ENCODE measurements at regions of chr6 and their contacts with region 1.

Region 1: DNA sequence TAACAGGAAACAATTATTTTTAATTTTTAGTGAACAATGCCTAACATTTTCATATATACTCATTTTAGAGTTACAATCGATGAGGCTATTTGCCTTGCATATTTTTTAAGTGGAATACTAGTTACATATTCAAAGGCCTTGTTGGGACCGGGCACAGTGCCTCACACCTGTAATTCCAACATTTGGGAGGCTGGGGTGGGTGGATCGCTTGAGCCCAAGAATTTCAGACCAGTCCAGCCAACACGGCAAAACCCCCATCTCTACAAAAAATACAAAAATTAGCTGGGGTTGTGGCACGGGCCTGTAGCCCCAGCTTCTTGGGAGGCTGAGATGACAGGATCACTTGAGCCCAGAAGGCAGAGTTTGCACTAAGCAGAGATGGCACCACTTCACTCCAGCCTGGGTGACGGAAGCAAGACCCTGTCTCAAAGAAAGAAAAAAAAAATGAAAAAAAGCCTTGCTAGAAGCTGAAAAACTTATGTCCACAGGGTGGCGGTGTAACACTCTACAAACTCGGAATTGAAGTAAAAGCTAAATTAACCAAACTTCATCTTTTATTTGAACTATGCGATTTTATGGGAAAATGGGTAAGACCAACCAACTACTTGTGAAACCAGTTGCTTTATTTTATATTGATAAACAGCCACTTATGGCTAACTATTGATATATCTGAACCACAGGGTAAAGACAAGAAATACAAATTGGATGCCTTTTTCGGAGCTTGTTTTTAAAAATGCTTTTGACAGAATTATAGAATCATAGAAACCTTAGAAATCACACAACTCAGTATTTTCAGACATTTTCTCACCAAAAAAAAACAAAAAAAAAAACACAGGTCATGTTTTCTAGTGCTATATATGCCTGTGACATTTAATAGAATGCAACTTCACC is 24.1 kb upstream of the ROS1 start:
- DNase-seq: peak in 3 of 5 donors; percentile 41 to 45 (median 41)
- ATAC-seq: peak in 1 of 4 donors; percentile 28
- H3K4me3 ChIP-seq: no peak overlapping the region
- H3K27ac ChIP-seq: no peak overlapping the region
- H3K4me1 ChIP-seq: peaks cover 0 to 9% (median 0%) of the 10 kb centered on the region in 12 donors
- H3K27me3 ChIP-seq: peaks cover 0 to 18% (median 4%) of the 10 kb centered on the region in 9 donors
- CTCF ChIP-seq: peak; percentile 66 to 86 (median 78)
- POLR2A ChIP-seq: no peak

Region 2: GRCh38 chr6:117346142-117346930 is 103.5 kb before region 1 on chr6:
- intact Hi-C with region 1: loop called in 4 of 10 experiments (anchors 5 to 10 kb)
- DNase-seq: no peak
- ATAC-seq: no peak
- H3K4me3 ChIP-seq: peak overlapping the region in 3 of 12 donors; percentile 21 to 31 (median 27)
- H3K27ac ChIP-seq: no peak overlapping the region
- H3K4me1 ChIP-seq: no peaks in the 10 kb centered on the region
- H3K27me3 ChIP-seq: peaks cover 0 to 3% (median 0%) of the 10 kb centered on the region in 9 donors
- CTCF ChIP-seq: peak; percentile 30 to 66 (median 54)
- POLR2A ChIP-seq: no peak

Region 3: GRCh38 chr6:117352466-117353081 is 97.2 kb before region 1 on chr6:
- intact Hi-C with region 1: loop called in 4 of 10 experiments (anchors 5 to 10 kb)
- DNase-seq: no peak
- ATAC-seq: no peak
- H3K4me3 ChIP-seq: no peak overlapping the region
- H3K27ac ChIP-seq: no peak overlapping the region
- H3K4me1 ChIP-seq: no peaks in the 10 kb centered on the region
- H3K27me3 ChIP-seq: no peaks in the 10 kb centered on the region
- CTCF ChIP-seq: peak in 9 of 12 donors; percentile 11 to 50 (median 23)
- POLR2A ChIP-seq: no peak

Region 4: GRCh38 chr6:117482240-117483003 is 32.6 kb after region 1 on chr6 and contains the start of gene DCBLD1:
- intact Hi-C with region 1: no loop called
- DNase-seq: peak; percentile 80 to 91 (median 84)
- ATAC-seq: peak; percentile 82 to 97 (median 92)
- H3K4me3 ChIP-seq: peak within 1 kb of the TSS; percentile 62 to 88 (median 78)
- H3K27ac ChIP-seq: peak within 1 kb of the TSS; percentile 19 to 92 (median 84)
- H3K4me1 ChIP-seq: peaks cover 0 to 40% (median 15%) of the 10 kb centered on the region in 12 donors
- H3K27me3 ChIP-seq: peaks cover 0 to 5% (median 0%) of the 10 kb centered on the region in 9 donors
- CTCF ChIP-seq: peak in 2 of 12 donors; percentile 15 to 16
- POLR2A ChIP-seq: peak in 1 of 2 donors; percentile 66
- total RNA-seq, gene DCBLD1: 3.1 to 11.4 (median 4.1) TPM

Region 5: GRCh38 chr6:117555882-117556498 is 106.2 kb after region 1 on chr6:
- intact Hi-C with region 1: loop called (anchors 1 to 5 kb)
- DNase-seq: peak in 2 of 5 donors; percentile 33 to 35
- ATAC-seq: peak in 1 of 4 donors; percentile 28
- H3K4me3 ChIP-seq: no peak overlapping the region
- H3K27ac ChIP-seq: no peak overlapping the region
- H3K4me1 ChIP-seq: peaks cover 0 to 8% (median 0%) of the 10 kb centered on the region in 12 donors
- H3K27me3 ChIP-seq: no peaks in the 10 kb centered on the region
- CTCF ChIP-seq: peak; percentile 74 to 97 (median 91)
- POLR2A ChIP-seq: no peak

Region 6: GRCh38 chr6:117642976-117643375 is 193.2 kb after region 1 on chr6:
- intact Hi-C with region 1: no loop called
- DNase-seq: no peak
- ATAC-seq: no peak
- H3K4me3 ChIP-seq: no peak overlapping the region
- H3K27ac ChIP-seq: no peak overlapping the region
- H3K4me1 ChIP-seq: no peaks in the 10 kb centered on the region
- H3K27me3 ChIP-seq: no peaks in the 10 kb centered on the region
- CTCF ChIP-seq: no peak
- POLR2A ChIP-seq: no peak

Region 7: DNA sequence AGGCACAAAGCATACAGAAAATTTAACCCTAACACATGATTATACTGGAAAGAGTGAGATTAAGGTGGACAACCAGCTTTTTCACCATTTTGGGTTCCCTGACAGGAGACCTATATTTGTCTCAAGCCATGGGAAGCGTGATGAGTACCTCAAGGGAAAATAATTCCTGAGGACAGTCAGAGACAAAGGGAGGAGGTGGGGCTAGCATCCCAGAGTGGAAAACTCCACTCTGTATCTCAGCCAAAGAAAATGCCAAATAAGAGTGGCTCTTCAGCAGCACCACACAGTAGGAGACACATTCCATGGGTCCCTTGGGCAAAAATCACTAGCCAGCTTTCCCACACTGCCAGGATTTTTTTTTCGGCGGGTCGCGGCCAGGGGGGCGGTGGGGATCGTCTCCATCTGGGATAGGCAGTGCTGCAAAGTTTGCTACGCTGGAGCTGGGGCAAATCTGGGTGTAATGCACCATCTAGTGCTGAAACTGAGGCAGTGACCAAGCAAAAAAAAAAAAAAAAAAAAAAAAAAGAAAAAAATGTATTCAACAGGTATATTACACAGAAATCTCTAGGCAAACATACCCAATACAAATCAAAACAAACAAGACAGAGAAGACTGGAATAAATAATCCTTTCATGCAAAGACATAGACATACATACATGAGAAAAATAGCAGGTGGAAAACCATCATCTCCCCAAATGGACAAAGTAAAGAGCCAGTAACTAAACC is 380.0 kb after region 1 on chr6:
- intact Hi-C with region 1: loop called in 1 of 10 experiments (anchors 5 kb)
- DNase-seq: peak in 1 of 5 donors; percentile 32
- ATAC-seq: peak in 2 of 4 donors; percentile 39 to 47
- H3K4me3 ChIP-seq: no peak overlapping the region
- H3K27ac ChIP-seq: no peak overlapping the region
- H3K4me1 ChIP-seq: no peaks in the 10 kb centered on the region
- H3K27me3 ChIP-seq: peaks cover 0 to 3% (median 0%) of the 10 kb centered on the region in 9 donors
- CTCF ChIP-seq: peak in 7 of 12 donors; percentile 7 to 38 (median 28)
- POLR2A ChIP-seq: no peak

Region 8: DNA sequence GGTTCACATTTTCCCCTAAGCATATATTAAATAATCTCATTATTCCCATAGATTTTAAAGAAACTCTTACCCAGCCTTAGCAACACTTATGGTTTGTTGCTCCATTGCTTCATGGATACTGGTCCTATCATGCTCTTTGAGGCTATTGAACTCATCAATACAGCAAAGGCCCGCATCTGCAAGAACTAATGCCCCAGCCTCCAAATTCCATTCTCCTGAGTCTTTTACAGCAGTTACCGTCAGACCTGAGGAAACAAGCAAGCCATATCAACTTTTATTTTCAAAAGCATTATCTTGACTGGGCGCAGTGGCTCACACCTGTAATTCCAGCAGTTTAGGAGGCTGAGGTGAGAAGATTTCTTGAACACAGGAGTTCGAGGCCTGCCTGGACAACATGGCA is 1406.5 kb after region 1 on chr6:
- intact Hi-C with region 1: no loop called
- DNase-seq: no peak
- ATAC-seq: no peak
- H3K4me3 ChIP-seq: no peak overlapping the region
- H3K27ac ChIP-seq: no peak overlapping the region
- H3K4me1 ChIP-seq: peaks cover 0 to 12% (median 0%) of the 10 kb centered on the region in 12 donors
- H3K27me3 ChIP-seq: no peaks in the 10 kb centered on the region
- CTCF ChIP-seq: no peak
- POLR2A ChIP-seq: no peak